Astrocyte of the cerebellum (primary cell): ENCODE measurements at regions of chr7 and their contacts with region 1.

Region 1: DNA sequence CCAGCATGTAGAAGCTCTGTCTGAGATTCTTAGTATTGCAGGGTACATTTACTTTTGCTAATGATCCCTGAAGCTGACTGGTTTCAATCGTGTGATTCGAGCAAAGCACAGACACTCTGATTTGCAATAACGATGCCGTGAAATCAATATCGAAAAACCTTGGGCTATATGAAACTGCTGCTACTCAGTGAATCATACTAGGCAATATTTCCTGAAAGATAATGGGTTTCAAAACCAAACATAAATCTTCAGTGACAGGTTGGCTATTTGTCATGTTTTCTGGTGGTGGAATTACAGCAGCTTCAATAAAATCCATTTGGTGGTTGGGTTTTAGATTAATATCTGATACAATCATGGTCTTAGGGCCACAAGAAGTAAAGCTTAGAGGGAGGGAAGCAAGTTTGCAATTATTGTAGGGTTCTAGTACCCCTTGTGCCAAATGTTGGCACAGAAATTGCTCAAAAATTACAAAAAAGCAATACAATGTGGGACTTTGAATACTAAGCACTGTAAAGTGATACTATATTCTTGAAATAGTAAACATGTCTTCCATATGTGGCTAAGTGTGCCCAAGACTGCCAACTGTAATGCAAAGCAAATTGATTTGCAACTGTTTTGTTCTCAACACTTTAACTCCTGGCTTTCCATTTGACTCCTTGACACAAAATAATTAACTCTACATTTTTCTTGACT is 112.4 kb upstream of the JAZF1 start:
- DNase-seq: no peak
- H3K4me3 ChIP-seq: no peak overlapping the region
- CTCF ChIP-seq: no peak

Region 2: DNA sequence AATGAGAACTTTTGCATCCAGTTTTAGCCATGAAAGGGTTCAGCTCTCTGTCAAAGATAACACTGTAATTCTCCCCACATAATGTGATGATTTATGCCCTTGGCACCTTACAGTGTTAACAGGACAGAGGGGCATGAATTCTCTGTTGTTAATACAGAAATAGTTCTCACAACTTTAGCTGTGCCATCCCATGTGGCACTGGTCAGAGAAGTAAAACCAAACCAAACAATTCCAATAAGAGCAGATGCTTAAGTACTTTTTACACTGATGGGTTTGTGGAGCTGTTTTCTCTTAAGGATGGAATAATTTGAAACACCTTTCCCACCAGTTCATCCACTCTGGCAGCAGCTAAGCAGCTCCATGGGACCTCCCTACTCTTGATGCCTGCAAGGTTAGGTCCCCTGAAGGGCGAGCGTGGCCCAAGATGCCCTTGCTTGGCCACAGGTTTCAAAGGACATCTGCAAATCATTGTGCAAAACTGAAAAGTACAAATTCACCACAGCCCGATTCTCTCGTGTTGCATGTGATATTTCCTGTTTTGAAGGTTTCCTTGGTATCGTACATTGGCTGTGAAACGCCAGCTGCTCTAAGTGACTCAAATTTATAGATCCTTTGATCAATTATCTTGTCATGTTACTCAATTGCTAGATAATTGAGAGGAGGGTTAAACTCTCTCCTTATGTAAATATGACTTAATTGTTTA is 36.8 kb after region 1 on chr7:
- in situ Hi-C with region 1: loop called (anchors 5 kb)
- DNase-seq: no peak
- H3K4me3 ChIP-seq: no peak overlapping the region
- CTCF ChIP-seq: no peak